Heart right ventricle (tissue), 16 donors: ENCODE measurements at regions of chr6 and their contacts with region 1.

Region 1: GRCh38 chr6:136792410-136793262 is at the start of gene MAP3K5:
- DNase-seq: peak; percentile 92 to 94
- ATAC-seq: peak; percentile 90 to 95 (median 93)
- H3K4me3 ChIP-seq: peak within 1 kb of the TSS; percentile 62 to 99 (median 80)
- H3K27ac ChIP-seq: peak within 1 kb of the TSS; percentile 82 to 97 (median 92)
- H3K4me1 ChIP-seq: peaks cover 3 to 44% (median 26%) of the 10 kb centered on the region in 9 donors
- H3K27me3 ChIP-seq: no peaks in the 10 kb centered on the region
- CTCF ChIP-seq: peak; percentile 46 to 89 (median 80)
- total RNA-seq, gene MAP3K5: 21.8 to 35.7 (median 28.4) TPM

Region 2: DNA sequence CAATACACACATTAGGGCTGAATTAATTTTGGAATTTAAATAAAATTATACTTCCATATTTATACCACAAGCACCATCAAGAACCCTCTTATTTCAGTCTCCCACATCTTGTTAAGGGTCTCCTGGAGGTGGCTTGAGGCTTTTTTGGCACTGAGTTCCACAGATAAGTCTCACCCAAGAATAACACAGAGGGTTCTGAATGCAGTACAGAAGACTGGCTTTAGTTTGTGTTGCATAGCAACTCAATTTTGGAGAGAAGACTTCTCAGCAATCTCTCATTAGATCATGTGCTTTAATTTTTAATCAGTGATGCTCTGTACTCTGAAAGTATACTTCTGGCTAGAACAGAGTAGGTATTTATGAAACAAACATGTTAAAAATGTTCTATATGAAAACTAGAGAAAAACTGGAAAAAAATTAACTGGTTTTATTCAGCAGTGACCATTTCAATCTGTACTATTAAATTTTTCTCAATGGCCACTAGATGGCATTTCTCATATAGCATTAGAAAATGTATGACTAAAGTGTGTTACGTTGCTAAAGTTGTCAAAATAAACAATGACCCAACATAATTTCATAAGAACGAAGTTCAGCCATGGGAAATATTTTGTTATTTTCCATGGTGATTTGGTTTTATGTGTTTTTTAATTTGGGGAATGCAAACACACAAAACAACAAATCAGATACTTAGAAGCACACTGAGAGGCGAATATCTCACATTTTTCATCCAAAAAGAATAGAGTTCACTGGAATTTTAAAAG is 209.7 kb before region 1 on chr6:
- intact Hi-C with region 1: loop called in 4 of 10 experiments (anchors 2 to 5 kb)
- DNase-seq: no peak
- ATAC-seq: peak in 6 of 8 donors; percentile 30 to 67 (median 52)
- H3K4me3 ChIP-seq: no peak overlapping the region
- H3K27ac ChIP-seq: peak overlapping the region in 6 of 10 donors; percentile 9 to 51 (median 14)
- H3K4me1 ChIP-seq: peaks cover 0 to 35% (median 15%) of the 10 kb centered on the region in 9 donors
- H3K27me3 ChIP-seq: no peaks in the 10 kb centered on the region
- CTCF ChIP-seq: peak; percentile 20 to 70 (median 56)

Region 3: GRCh38 chr6:136607932-136608772 is 184.5 kb before region 1 on chr6:
- intact Hi-C with region 1: loop called in 2 of 10 experiments (anchors 10 kb)
- DNase-seq: peak; percentile 26 to 69
- ATAC-seq: peak in 6 of 8 donors; percentile 24 to 64 (median 56)
- H3K4me3 ChIP-seq: no peak overlapping the region
- H3K27ac ChIP-seq: peak overlapping the region in 1 of 10 donors; percentile 58
- H3K4me1 ChIP-seq: peaks cover 0 to 37% (median 16%) of the 10 kb centered on the region in 9 donors
- H3K27me3 ChIP-seq: no peaks in the 10 kb centered on the region
- CTCF ChIP-seq: peak; percentile 40 to 79 (median 72)

Region 4: GRCh38 chr6:136643850-136644596 is 148.6 kb before region 1 on chr6:
- intact Hi-C with region 1: loop called (anchors 1 to 2 kb)
- DNase-seq: peak; percentile 84 to 93
- ATAC-seq: peak; percentile 86 to 98 (median 95)
- H3K4me3 ChIP-seq: no peak overlapping the region
- H3K27ac ChIP-seq: peak overlapping the region in 9 of 10 donors; percentile 26 to 73 (median 55)
- H3K4me1 ChIP-seq: peaks cover 8 to 55% (median 41%) of the 10 kb centered on the region in 9 donors
- H3K27me3 ChIP-seq: no peaks in the 10 kb centered on the region
- CTCF ChIP-seq: peak; percentile 56 to 93 (median 89)

Region 5: DNA sequence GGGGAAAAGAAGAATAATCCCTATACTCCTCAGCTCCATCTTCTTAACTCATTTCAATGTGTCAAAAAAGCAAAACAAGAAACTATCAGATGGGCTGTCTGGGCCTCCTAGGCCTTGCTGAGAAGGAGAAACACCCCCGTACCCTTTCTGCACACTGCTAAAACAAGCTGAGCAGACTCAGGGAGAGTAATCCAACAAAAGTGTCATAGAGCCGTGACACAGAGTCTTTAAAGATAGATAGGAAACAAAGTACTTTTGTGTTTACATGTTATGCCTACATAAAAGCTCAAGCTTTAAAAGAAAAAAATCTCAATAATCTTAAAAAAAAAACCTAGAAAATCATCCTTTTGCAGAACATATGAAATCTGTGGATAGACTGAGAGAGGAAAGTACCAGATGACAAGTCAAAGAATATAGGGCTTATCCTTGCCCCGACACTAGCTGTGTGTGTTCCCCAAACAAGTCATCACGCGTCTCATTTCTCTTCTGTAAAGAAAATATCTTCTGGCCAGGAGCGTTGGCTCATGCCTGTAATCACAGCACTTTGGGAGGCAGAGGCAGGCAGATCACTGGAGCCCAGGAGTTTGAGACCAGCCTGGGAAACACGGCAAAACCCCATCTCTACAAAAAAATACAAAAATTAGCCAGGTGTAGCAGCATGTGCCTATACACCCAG is 81.6 kb before region 1 on chr6:
- intact Hi-C with region 1: loop called in 3 of 10 experiments (anchors 5 to 10 kb)
- DNase-seq: no peak
- ATAC-seq: peak in 3 of 8 donors; percentile 20 to 51 (median 45)
- H3K4me3 ChIP-seq: no peak overlapping the region
- H3K27ac ChIP-seq: peak overlapping the region in 6 of 10 donors; percentile 3 to 59 (median 26)
- H3K4me1 ChIP-seq: peaks cover 0 to 27% (median 7%) of the 10 kb centered on the region in 9 donors
- H3K27me3 ChIP-seq: no peaks in the 10 kb centered on the region
- CTCF ChIP-seq: no peak

Region 6: GRCh38 chr6:136737871-136738691 is 54.6 kb before region 1 on chr6:
- intact Hi-C with region 1: loop called in 1 of 10 experiments (anchors 5 kb)
- DNase-seq: peak in 1 of 2 donors; percentile 47
- ATAC-seq: peak; percentile 55 to 90 (median 70)
- H3K4me3 ChIP-seq: peak overlapping the region in 3 of 10 donors; percentile 3 to 22 (median 6)
- H3K27ac ChIP-seq: peak overlapping the region; percentile 16 to 74 (median 50)
- H3K4me1 ChIP-seq: peaks cover 4 to 54% (median 35%) of the 10 kb centered on the region in 9 donors
- H3K27me3 ChIP-seq: no peaks in the 10 kb centered on the region
- CTCF ChIP-seq: no peak

Region 7: DNA sequence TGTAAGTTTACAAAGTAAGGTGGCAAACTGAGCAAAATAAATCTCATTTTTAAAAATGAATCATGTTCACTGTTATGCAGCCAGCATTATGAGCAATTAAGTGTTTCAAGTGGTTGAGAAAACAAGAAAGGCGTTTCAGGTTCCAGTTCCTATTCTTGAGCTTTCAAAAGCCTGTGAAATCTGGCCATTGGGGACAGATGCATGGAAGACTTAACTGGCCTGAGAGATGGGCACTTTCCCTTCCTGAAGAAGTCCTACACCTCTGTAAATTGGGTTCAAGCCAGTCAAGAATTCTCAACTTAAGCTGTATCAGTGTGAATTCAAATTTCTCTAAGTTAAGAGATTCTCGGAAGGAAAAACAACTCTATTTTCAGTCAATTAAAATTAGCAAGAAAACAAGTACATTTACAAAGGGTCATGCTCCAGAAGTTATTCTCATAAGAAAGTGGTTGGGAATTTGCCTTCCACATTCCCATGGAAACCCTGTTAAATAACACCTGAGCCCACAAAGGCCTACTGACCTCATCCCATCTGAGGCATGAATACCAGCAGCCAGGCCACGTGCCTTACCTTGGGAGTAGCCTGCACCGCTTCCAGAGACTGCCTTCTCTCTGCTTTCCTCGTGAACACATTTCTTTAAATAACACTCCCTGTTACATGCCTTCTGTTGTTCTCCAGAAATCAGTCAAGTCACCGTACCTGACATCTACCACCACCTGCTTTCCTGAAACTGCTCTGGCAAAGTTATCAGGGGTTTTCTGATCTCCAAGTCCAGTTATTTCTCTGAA is 19.8 kb before region 1 on chr6:
- intact Hi-C with region 1: loop called in 1 of 10 experiments (anchors 1 kb)
- DNase-seq: peak in 1 of 2 donors; percentile 38
- ATAC-seq: peak in 7 of 8 donors; percentile 49 to 87 (median 76)
- H3K4me3 ChIP-seq: no peak overlapping the region
- H3K27ac ChIP-seq: peak overlapping the region in 8 of 10 donors; percentile 47 to 67 (median 55)
- H3K4me1 ChIP-seq: peaks cover 0 to 64% (median 49%) of the 10 kb centered on the region in 9 donors
- H3K27me3 ChIP-seq: no peaks in the 10 kb centered on the region
- CTCF ChIP-seq: no peak

Region 8: DNA sequence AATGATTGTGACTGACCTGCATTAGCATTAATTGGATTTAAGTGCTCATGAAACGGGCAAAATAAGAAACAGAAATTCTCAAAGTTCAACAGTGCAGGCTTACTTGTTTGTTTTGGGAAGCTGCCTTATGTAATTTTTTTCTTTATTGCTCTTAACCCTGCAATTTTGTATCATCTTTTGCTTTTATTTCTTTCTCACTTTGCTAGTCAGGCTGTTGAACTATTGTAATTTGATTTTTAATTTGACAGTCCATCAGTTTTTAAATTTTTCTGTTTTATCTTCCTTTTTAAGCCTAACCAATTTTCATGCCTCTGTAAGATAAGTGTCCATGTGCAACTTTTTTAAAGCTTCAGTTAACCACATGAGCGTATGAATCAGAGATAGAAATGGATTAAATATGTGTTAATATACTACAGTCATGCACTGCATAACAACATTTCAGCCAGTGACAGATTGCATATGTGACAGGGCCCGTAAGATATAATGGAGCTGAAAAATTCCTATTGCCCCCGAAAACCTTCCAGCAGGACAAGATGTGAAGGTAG is 74.3 kb after region 1 on chr6:
- intact Hi-C with region 1: no loop called
- DNase-seq: no peak
- ATAC-seq: no peak
- H3K4me3 ChIP-seq: no peak overlapping the region
- H3K27ac ChIP-seq: no peak overlapping the region
- H3K4me1 ChIP-seq: peaks cover 0 to 4% (median 0%) of the 10 kb centered on the region in 9 donors
- H3K27me3 ChIP-seq: no peaks in the 10 kb centered on the region
- CTCF ChIP-seq: no peak

Region 9: DNA sequence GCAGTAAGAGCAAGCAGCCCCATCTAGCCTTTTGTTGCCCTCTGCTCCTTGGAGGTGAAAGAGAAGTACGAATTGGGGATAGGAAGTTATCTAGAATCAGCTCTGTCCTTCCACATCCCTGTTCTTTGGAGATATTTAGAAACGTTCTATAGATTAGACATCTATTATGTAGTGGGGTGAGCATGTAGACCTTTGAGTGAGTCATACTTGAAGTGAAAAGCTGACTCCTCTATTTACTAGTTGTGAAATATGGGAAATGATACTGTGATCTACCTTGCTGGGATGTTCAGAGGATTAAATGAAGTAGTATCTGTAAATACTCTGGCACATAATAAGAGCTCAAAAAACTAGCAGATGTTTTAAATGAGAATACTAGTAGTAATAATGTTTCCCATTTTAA is 93.5 kb after region 1 on chr6:
- intact Hi-C with region 1: no loop called
- DNase-seq: no peak
- ATAC-seq: no peak
- H3K4me3 ChIP-seq: no peak overlapping the region
- H3K27ac ChIP-seq: no peak overlapping the region
- H3K4me1 ChIP-seq: peaks cover 0 to 9% (median 0%) of the 10 kb centered on the region in 9 donors
- H3K27me3 ChIP-seq: no peaks in the 10 kb centered on the region
- CTCF ChIP-seq: no peak